OCI-LY7 (cell line): ENCODE measurements at regions of chr12 and their contacts with region 1.

Region 1: DNA sequence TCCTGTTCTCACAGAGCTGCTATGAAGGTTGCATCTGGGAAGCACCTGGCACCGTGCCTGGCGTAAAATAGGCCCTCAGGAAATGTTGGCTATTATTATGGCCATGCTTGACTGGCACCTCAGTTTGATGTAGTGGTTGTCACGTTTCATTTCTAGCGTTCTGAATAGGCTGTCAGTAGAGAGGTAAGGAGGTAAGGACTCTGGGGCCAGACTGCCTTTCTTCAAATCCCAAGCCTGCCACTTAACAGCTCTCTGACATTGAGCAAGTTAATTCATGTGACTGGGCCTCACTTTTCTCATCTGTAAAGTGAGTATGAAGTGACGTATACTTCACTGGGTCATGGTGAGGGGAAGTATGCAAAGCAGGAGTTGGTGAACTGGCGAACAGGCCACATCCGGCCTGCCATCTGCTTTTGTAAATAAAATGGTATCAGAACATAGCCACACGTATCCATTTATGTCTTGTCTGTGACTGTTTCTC is 196.2 kb downstream of the CACNA1C start:
- DNase-seq: peak; percentile 94
- H3K4me3 ChIP-seq: peak overlapping the region; percentile 48
- H3K27ac ChIP-seq: peak overlapping the region; percentile 99
- H3K4me1 ChIP-seq: peaks cover 93% of the 10 kb centered on the region
- CTCF ChIP-seq: no peak

Region 2: GRCh38 chr12:1305791-1306500 is 943.0 kb before region 1 on chr12:
- CTCF ChIA-PET with region 1: no interaction called
- POLR2A ChIA-PET with region 1: no interaction called
- intact Hi-C with region 1: no loop called
- DNase-seq: peak; percentile 24
- H3K4me3 ChIP-seq: peak overlapping the region; percentile 15
- H3K27ac ChIP-seq: peak overlapping the region; percentile 63
- H3K4me1 ChIP-seq: peaks cover 60% of the 10 kb centered on the region
- CTCF ChIP-seq: no peak

Region 3: DNA sequence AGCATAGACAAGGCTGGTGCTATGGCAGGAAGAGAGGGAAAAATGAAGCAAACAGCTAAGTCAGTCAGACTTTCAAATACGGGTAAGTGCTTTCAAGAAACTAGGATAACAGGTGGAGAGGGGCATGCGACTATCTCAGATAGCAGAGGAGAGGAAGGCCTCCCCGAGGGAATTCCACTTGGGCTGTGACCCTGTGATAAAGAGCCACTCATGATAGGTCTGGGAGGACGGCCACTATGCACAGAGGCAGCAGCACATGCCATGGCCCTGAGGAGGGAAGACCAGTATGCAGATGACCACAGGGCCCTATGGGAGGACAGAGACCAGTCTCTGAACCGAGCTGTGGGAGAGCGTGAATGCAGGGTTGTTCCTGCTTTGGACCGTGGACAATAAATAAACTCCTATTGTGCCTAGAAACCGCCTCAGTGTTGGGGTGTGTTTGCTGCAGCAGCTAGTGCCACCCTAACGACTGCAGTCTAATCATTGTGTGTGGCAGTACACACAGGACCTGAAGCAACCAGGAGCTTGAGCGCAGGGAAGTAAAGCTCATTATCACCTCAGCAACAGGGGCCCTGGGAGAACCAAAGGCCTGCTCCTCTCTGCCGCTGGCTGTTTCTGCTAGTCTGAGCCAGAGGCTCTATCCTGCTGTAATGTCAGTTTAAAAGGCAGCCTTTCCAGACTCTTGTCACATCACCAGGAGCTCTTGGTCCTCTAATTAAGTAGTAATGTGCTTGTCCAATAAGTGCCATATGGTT is 77.1 kb before region 1 on chr12:
- CTCF ChIA-PET with region 1: no interaction called
- POLR2A ChIA-PET with region 1: no interaction called
- intact Hi-C with region 1: no loop called
- DNase-seq: no peak
- H3K4me3 ChIP-seq: no peak overlapping the region
- H3K27ac ChIP-seq: no peak overlapping the region
- H3K4me1 ChIP-seq: no peaks in the 10 kb centered on the region
- CTCF ChIP-seq: no peak

Region 4: DNA sequence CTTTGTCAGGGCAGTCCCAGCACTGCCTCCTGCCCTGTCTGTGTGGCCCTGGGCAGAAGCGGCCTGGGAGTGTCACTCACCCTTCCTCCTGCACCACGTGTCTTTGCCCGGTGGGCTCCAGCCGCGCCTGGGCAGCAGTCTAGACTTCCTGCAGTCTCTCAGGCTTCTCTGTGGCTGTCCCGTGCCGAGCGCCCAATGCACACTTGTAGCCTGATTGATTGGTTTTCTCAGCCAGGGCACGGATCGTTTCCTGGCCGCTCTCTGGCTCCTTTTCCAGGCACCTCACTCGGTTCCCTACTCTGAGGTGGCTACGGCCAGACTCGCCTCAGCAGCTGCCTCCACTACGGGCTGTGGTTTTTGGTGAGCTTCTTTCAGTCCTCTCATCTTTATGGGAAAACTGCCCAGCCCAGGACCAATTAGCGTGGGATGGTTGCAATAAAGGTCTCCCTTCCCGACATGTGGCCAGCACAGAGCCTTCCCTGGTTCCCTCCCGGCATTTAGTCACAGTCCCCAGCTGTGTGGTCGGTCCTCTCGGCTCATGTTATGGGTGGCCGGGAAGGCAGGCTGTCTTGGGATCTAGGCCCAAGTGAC is 63.1 kb before region 1 on chr12:
- CTCF ChIA-PET with region 1: no interaction called
- POLR2A ChIA-PET with region 1: no interaction called
- intact Hi-C with region 1: loop called (anchors 1 kb)
- DNase-seq: no peak
- H3K4me3 ChIP-seq: no peak overlapping the region
- H3K27ac ChIP-seq: peak overlapping the region; percentile 68
- H3K4me1 ChIP-seq: peaks cover 62% of the 10 kb centered on the region
- CTCF ChIP-seq: no peak

Region 5: DNA sequence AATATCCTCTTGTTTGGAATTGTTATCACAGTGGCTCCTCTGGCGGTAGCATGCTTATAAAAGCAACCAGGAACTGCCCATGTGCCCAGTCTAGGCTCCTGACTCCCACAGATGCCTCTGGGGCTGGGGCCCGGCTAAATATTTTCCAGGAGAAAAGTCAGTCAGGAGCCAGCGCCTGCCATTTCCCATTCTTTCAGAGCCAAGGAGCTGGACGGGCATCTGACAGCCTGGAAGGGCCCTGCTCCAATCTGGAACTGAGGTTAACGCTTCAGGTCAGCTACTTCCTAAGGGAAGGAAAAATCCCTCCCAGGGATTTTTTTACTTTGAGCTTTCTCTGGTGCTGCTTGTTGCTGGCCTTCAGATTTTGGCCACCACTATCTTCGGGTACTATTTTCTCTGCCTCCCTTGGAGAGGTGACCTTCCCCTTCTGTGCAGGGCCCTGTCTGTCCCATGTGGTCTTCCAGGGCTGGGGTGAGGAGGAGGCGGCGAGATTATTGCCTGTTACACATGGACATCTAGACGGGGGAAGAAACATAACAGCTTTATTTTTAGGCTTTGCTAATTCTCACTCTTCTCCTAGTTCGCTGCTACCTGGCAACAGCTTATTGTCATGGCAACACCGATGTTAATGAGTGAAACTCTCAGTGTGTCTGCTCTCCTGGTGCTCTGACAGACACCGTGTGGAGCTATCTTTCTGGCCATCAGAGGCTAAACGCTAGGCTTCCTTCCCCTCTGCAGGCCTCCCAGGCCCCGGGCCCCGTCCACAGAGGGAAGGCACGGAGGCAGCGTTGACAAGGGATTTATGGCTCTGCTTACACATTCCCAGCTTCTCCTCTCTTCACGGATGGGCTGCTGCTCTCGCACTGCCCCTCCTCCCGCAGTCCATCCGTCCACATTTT is 35.7 kb before region 1 on chr12:
- CTCF ChIA-PET with region 1: no interaction called
- POLR2A ChIA-PET with region 1: no interaction called
- intact Hi-C with region 1: no loop called
- DNase-seq: no peak
- H3K4me3 ChIP-seq: no peak overlapping the region
- H3K27ac ChIP-seq: no peak overlapping the region
- H3K4me1 ChIP-seq: peaks cover 14% of the 10 kb centered on the region
- CTCF ChIP-seq: no peak

Region 6: DNA sequence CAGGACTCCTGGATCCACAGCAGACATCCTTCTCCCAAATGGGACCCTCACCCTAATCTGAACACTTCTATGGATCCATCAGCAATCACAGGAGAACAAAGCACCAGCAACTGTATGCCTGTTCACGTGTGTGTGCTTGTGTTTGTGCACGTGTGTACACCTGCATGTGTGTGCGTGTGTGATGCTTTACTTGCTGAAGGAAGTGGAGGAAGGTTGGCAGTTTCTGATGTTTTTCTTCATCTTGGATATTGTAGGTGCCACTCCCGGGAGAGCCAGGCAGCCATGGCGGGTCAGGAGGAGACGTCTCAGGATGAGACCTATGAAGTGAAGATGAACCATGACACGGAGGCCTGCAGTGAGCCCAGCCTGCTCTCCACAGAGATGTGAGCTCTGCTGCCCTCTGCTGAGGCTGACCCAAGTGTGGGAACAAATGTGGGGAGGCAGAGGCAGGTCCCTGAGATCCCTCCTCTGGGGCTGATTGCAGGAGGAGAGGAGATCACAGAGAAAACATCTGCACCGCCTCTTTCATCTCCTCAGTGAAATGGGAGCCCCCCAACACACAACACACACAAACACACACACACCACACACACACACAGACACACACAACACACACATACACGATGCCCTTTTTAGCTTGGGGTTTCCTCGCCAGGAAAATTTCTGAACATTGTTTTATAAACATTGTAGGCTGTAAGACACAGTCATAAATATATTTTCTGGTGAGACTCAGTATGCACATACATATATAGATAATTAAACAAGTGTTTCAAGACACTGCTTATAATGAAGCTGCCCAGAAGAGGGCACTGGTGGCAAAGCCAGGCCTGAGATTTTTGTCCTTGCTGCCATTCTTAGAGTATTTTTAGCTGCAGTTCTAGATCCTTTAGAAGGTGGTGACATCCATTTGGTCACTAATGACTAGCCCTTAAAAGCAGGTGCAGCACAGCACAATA is 433.6 kb after region 1 on chr12:
- CTCF ChIA-PET with region 1: no interaction called
- POLR2A ChIA-PET with region 1: no interaction called
- intact Hi-C with region 1: no loop called
- DNase-seq: peak; percentile 55
- H3K4me3 ChIP-seq: no peak overlapping the region
- H3K27ac ChIP-seq: no peak overlapping the region
- H3K4me1 ChIP-seq: no peaks in the 10 kb centered on the region
- CTCF ChIP-seq: peak; percentile 75